ENCODE measurements at regions of chr6 and their contacts with region 1.

Region 1: DNA sequence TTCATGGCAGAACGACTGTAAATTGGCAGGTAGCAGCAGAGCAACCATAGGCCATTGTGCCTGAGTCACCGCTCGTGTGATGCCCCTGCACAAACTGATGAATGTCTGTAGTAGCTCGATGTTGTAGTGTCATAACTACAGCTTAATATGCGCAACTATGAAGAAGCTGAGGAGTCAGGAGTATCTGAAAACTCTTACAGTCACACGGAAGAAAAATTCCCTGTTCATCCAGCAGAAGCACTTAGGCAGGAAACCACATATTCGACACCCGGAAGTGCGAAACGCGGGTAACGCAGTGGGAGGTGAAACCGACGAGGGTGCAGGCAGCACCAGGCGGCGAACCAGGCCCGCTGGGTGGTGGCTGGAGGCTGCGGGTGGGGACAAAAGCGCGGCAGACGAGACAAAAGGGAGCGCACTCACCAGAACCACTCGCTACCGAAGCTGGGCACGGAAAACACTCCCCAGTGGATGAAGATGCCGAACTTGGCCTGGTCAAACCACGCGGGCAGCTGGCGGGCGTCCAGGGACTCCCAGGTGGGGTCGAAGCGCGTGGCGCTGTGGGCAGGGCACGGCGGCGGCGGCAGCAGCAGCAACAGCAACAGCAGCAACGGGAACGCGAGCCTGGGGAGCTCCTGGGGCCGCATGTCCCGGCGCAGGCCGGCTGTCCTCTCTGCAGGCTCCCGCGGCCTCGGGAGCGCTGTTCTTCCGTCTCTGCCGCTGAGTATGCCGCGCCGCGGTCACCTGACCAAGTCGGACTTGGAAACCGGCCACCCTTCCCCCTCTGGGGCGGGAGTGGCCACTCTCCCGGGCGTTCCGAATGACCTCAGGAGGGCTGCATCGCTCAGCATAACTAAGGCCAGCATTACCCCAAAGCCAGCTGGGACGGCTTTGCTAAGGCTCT is at the start of gene FUCA2:
- DNase-seq: peak; percentile 47
- ATAC-seq: peak; percentile 69
- H3K4me3 Mint-ChIP-seq: peak within 1 kb of the TSS; percentile 90
- H3K27ac Mint-ChIP-seq: peak within 1 kb of the TSS; percentile 74
- H3K4me1 Mint-ChIP-seq: peaks cover 28% of the 10 kb centered on the region
- H3K27me3 Mint-ChIP-seq: no peaks in the 10 kb centered on the region
- CTCF ChIP-seq: no peak
- total RNA-seq, gene FUCA2: 8.7 and 9.9 TPM in 2 replicates

Region 2: GRCh38 chr6:142960098-142960497 is 551.1 kb before region 1 on chr6:
- CTCF ChIA-PET with region 1: no interaction called
- POLR2A ChIA-PET with region 1: no interaction called
- intact Hi-C with region 1: no loop called
- DNase-seq: no peak
- ATAC-seq: no peak
- H3K4me3 Mint-ChIP-seq: no peak overlapping the region
- H3K27ac Mint-ChIP-seq: no peak overlapping the region
- H3K4me1 Mint-ChIP-seq: peaks cover 7% of the 10 kb centered on the region
- H3K27me3 Mint-ChIP-seq: no peaks in the 10 kb centered on the region
- CTCF ChIP-seq: no peak

Region 3: DNA sequence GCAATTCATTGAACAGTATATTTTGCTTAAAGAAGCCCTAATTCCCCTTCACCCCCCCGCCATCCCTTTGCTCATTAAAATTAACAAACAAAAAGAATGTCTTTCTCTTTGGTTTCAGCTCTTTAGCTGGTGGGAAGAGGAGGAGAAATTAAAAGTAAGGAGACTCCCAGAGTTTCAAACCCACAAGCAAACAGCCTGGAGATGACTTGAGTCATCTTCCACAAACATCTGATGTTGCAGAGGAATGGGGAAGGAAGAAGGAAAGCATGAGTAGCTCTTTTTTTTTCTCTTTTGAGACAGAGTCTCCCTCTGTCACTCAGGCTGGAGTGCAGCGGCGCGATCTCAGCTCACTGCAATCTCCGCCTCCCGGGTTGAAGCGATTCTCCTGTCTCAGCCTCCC is 250.4 kb before region 1 on chr6:
- CTCF ChIA-PET with region 1: no interaction called
- POLR2A ChIA-PET with region 1: no interaction called
- intact Hi-C with region 1: no loop called
- DNase-seq: no peak
- ATAC-seq: no peak
- H3K4me3 Mint-ChIP-seq: no peak overlapping the region
- H3K27ac Mint-ChIP-seq: no peak overlapping the region
- H3K4me1 Mint-ChIP-seq: no peaks in the 10 kb centered on the region
- H3K27me3 Mint-ChIP-seq: no peaks in the 10 kb centered on the region
- CTCF ChIP-seq: no peak

Region 4: DNA sequence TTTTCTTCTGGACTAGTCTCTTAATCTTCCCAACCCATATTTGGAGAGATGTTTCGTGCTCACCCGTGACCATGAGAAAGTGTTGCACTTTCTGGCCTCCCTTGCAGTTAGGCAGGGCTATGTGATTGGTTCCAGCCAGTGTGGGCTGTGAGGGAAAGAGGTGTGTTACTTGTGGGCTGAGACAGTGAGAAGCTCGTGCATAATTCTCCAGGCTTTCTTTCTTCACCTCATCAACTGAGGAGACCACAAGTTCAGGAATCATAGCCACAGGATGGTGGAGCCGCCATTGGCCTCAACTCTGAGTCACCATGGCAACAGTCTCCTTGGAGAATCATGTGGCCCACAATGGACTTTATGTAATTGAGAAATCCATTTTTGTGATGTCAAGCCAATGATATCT is 57.8 kb after region 1 on chr6:
- CTCF ChIA-PET with region 1: no interaction called
- POLR2A ChIA-PET with region 1: interaction called, 4 read pairs
- intact Hi-C with region 1: loop called (anchors 2 kb)
- DNase-seq: no peak
- ATAC-seq: no peak
- H3K4me3 Mint-ChIP-seq: no peak overlapping the region
- H3K27ac Mint-ChIP-seq: no peak overlapping the region
- H3K4me1 Mint-ChIP-seq: peaks cover 14% of the 10 kb centered on the region
- H3K27me3 Mint-ChIP-seq: no peaks in the 10 kb centered on the region
- CTCF ChIP-seq: no peak

Measured in activated B cell treated with CpG ODN at 0.5 μM for 24 hours (primary cell).